CD4-positive, alpha-beta T cell (primary cell): ENCODE measurements at regions of chr15 and their contacts with region 1.

Region 1: DNA sequence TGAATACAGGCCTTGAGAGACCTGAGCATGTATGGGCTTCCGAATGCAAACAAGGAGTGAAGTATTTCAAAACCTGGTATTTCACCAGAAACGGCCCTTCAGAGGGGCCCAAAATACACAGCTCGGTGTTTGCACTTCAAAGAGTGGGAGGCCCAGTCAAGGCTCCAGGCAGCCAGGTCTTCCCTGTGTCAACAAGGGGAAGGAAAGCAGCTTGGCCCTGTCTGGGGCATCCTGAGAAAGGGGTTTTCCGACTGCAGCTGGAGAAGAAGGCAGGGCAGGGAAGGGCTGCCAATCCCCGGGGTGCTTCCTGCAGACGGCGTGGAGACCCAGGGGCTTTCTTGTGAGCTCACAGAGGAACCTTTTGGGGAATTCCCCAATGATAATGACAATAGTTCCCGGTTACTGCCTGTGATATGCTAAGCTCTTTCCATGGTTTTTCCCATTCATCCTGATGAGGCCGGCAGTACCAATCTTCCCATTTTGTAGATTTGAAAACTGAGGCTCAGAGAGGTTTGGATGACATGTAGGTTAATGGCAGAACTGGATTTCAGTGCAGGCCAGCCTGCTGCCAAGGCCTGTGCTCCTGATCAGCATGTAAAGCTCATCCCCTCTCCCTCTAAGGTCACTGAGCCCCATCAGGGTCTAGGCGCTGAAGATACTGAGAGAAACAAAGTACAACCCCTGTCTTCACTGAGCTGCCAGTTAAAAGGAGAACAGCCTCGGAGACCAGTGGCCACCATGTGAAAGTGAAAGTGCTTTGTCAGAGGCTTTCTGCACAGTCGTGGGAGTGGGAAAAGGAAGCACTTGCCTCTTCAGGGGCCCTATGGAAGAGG is 43.0 kb upstream of the TLE3 start:
- DNase-seq: peak in 6 of 14 experiments; percentile 2 to 87 (median 38)
- ATAC-seq: peak; percentile 65
- H3K4me3 ChIP-seq: peak overlapping the region; percentile 37
- H3K4me3 Mint-ChIP-seq: peak overlapping the region; percentile 23
- H3K27ac ChIP-seq: no peak overlapping the region
- H3K27ac Mint-ChIP-seq: peak overlapping the region; percentile 16
- H3K4me1 ChIP-seq: peaks cover 25% of the 10 kb centered on the region
- H3K4me1 Mint-ChIP-seq: peaks cover 30% of the 10 kb centered on the region
- H3K27me3 ChIP-seq: no peaks in the 10 kb centered on the region
- H3K27me3 Mint-ChIP-seq: no peaks in the 10 kb centered on the region
- CTCF ChIP-seq: no peak

Region 2: DNA sequence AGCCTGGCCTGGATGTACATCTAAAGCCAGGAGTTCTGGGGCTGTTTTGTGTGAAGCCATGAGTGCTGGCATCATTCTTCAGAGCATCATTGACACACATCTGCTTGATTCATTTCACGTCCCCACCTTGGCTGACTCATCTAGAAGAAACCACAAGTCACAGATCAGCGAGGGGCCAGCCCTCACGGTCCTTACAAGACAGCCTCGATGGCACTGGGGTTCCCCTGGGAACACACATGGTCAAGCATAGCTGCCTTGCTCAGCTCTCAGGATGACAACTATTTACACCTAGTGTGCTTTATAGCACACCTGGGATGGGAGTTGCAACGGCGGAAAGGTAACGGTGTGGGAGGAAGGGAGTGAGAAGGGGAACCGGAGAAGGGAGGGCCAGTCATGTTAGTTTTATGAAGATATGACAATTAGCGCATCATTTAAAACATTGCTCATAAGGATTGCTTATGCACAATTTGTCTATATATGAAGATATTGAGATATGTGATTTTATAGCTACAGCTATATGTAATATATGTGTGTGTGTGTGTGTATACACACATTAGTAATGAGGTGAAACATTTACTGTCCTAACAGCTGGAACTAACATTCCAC is 461.0 kb before region 1 on chr15:
- CTCF ChIA-PET with region 1: no interaction called
- POLR2A ChIA-PET with region 1: no interaction called
- intact Hi-C with region 1: no loop called
- DNase-seq: peak in 4 of 14 experiments; percentile 25 to 43 (median 30)
- ATAC-seq: peak; percentile 34
- H3K4me3 ChIP-seq: no peak overlapping the region
- H3K4me3 Mint-ChIP-seq: no peak overlapping the region
- H3K27ac ChIP-seq: no peak overlapping the region
- H3K27ac Mint-ChIP-seq: no peak overlapping the region
- H3K4me1 ChIP-seq: peaks cover 8% of the 10 kb centered on the region
- H3K4me1 Mint-ChIP-seq: no peaks in the 10 kb centered on the region
- H3K27me3 ChIP-seq: no peaks in the 10 kb centered on the region
- H3K27me3 Mint-ChIP-seq: no peaks in the 10 kb centered on the region
- CTCF ChIP-seq: no peak

Region 3: DNA sequence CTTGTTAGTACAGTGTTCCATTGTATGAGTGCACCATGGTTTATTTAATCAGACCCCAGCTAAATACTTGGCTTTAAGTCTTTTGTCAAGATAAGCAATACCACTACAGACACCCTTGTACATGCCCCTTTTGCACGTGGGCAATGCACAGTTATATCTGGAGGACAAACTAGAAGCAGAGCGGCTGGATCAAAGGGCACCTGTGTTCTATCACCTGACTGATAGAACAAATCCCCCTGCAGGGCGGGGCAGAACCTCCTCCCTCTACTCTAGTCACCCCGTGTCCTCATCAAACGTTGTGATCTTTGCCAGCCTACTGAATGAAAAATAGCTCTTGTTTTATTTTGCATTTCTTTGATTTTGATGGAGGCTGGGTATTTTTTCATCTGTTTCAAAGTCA is 357.9 kb before region 1 on chr15:
- CTCF ChIA-PET with region 1: no interaction called
- POLR2A ChIA-PET with region 1: no interaction called
- intact Hi-C with region 1: no loop called
- DNase-seq: peak in 8 of 14 experiments; percentile 19 to 64 (median 48)
- ATAC-seq: peak; percentile 97
- H3K4me3 ChIP-seq: no peak overlapping the region
- H3K4me3 Mint-ChIP-seq: peak overlapping the region; percentile 13
- H3K27ac ChIP-seq: no peak overlapping the region
- H3K27ac Mint-ChIP-seq: no peak overlapping the region
- H3K4me1 ChIP-seq: peaks cover 18% of the 10 kb centered on the region
- H3K4me1 Mint-ChIP-seq: peaks cover 21% of the 10 kb centered on the region
- H3K27me3 ChIP-seq: no peaks in the 10 kb centered on the region
- H3K27me3 Mint-ChIP-seq: peaks cover 28% of the 10 kb centered on the region
- CTCF ChIP-seq: no peak

Region 4: DNA sequence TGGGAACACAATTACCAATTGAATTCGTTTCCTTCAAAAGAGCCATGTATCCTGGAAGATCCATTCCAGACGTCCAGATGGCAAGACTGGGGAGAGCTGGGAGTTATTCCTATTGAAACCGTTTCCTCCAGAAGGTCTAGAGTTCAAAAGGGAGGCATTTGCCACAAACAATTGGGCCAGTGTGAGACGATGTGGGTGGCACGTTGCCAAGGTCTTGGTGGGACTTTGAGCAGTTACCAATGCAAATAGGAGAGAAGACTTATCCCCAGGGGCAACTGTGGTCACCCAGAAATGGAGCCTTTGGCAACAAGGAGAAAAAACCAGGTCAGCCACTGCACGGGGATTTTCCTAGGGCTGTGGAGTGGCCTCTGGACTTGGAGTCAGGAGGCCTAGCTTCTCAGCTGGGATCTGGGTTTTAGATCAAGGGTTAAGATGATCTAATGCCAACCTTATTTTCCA is 13.4 kb before region 1 on chr15:
- CTCF ChIA-PET with region 1: no interaction called
- POLR2A ChIA-PET with region 1: no interaction called
- intact Hi-C with region 1: no loop called
- DNase-seq: no peak
- ATAC-seq: no peak
- H3K4me3 ChIP-seq: no peak overlapping the region
- H3K4me3 Mint-ChIP-seq: no peak overlapping the region
- H3K27ac ChIP-seq: no peak overlapping the region
- H3K27ac Mint-ChIP-seq: no peak overlapping the region
- H3K4me1 ChIP-seq: no peaks in the 10 kb centered on the region
- H3K4me1 Mint-ChIP-seq: no peaks in the 10 kb centered on the region
- H3K27me3 ChIP-seq: peaks cover 0 to 8% of the 10 kb centered on the region in 2 experiments
- H3K27me3 Mint-ChIP-seq: no peaks in the 10 kb centered on the region
- CTCF ChIP-seq: no peak

Region 5: GRCh38 chr15:70584838-70585706 is 444.3 kb after region 1 on chr15:
- CTCF ChIA-PET with region 1: no interaction called
- POLR2A ChIA-PET with region 1: no interaction called
- intact Hi-C with region 1: loop called in 1 of 2 experiments (anchors 10 kb)
- DNase-seq: peak; percentile 24 to 73 (median 46)
- ATAC-seq: peak; percentile 86
- H3K4me3 ChIP-seq: no peak overlapping the region
- H3K4me3 Mint-ChIP-seq: peak overlapping the region; percentile 68
- H3K27ac ChIP-seq: no peak overlapping the region
- H3K27ac Mint-ChIP-seq: no peak overlapping the region
- H3K4me1 ChIP-seq: peaks cover 16% of the 10 kb centered on the region
- H3K4me1 Mint-ChIP-seq: peaks cover 21% of the 10 kb centered on the region
- H3K27me3 ChIP-seq: peaks cover 0 to 5% of the 10 kb centered on the region in 2 experiments
- H3K27me3 Mint-ChIP-seq: peaks cover 15% of the 10 kb centered on the region
- CTCF ChIP-seq: peak; percentile 76